Naive thymus-derived CD4-positive, alpha-beta T cell (primary cell): ENCODE measurements at regions of chr3 and their contacts with region 1.

Region 1: GRCh38 chr3:38453075-38453912 is at the start of gene ACVR2B:
- DNase-seq: peak; percentile 20 to 83 (median 58)
- ATAC-seq: peak; percentile 74
- H3K4me3 ChIP-seq: peak within 1 kb of the TSS; percentile 74
- H3K4me3 Mint-ChIP-seq: peak within 1 kb of the TSS; percentile 88 to 99 (median 97)
- H3K27ac ChIP-seq: peak within 1 kb of the TSS; percentile 60
- H3K27ac Mint-ChIP-seq: peak within 1 kb of the TSS; percentile 59 to 95 (median 91)
- H3K4me1 ChIP-seq: peaks cover 5 to 12% of the 10 kb centered on the region in 2 donors
- H3K4me1 Mint-ChIP-seq: peaks cover 7 to 32% (median 25%) of the 10 kb centered on the region in 7 donors
- H3K27me3 ChIP-seq: no peaks in the 10 kb centered on the region
- H3K27me3 Mint-ChIP-seq: peaks cover 0 to 18% (median 0%) of the 10 kb centered on the region in 5 donors
- total RNA-seq, gene ACVR2B: 3.8 to 14.0 (median 8.3) TPM

Region 2: GRCh38 chr3:38346587-38347410 is 106.5 kb before region 1 on chr3 and contains the start of gene XYLB:
- CTCF ChIA-PET with region 1: interaction called, 13 read pairs
- POLR2A ChIA-PET with region 1: interaction called, 3 read pairs
- intact Hi-C with region 1: loop called (anchors 2 kb)
- DNase-seq: peak; percentile 48 to 89 (median 67)
- ATAC-seq: peak; percentile 99
- H3K4me3 ChIP-seq: peak within 1 kb of the TSS; percentile 62
- H3K4me3 Mint-ChIP-seq: peak within 1 kb of the TSS; percentile 71 to 91 (median 83)
- H3K27ac ChIP-seq: peak within 1 kb of the TSS; percentile 61
- H3K27ac Mint-ChIP-seq: peak within 1 kb of the TSS in 3 of 9 donors; percentile 54 to 61 (median 54)
- H3K4me1 ChIP-seq: no peaks in the 10 kb centered on the region
- H3K4me1 Mint-ChIP-seq: peaks cover 2 to 7% (median 5%) of the 10 kb centered on the region in 7 donors
- H3K27me3 ChIP-seq: no peaks in the 10 kb centered on the region
- H3K27me3 Mint-ChIP-seq: peaks cover 0 to 4% (median 0%) of the 10 kb centered on the region in 5 donors
- total RNA-seq, gene XYLB: 1.00 to 6.7 (median 2.1) TPM

Region 3: DNA sequence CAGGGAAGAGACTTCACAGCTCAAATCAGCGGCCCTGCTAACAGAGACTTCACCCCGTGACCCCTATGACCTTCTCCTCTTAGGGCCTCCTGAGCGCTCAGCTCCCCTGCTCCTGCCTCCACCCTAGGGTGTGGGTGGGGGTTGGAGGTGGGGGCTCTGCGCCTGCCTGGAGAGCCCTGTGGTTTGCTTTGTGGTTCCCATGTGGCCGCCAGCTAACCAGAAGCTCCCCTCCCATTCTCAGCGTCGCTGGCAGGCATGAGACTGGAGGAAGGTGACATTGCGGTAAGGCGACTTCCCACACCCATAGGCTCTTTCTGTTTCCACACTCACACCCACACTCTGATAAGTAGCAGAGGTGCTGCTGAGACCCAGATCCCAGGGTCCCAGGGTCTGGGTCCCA is 79.1 kb before region 1 on chr3:
- CTCF ChIA-PET with region 1: no interaction called
- POLR2A ChIA-PET with region 1: no interaction called
- intact Hi-C with region 1: loop called in 1 of 2 experiments (anchors 2 kb)
- DNase-seq: peak in 6 of 9 donors; percentile 4 to 63 (median 30)
- ATAC-seq: peak; percentile 60
- H3K4me3 ChIP-seq: peak overlapping the region; percentile 1
- H3K4me3 Mint-ChIP-seq: peak overlapping the region; percentile 65 to 83 (median 78)
- H3K27ac ChIP-seq: no peak overlapping the region
- H3K27ac Mint-ChIP-seq: peak overlapping the region in 8 of 9 donors; percentile 48 to 86 (median 72)
- H3K4me1 ChIP-seq: peaks cover 19 to 24% of the 10 kb centered on the region in 2 donors
- H3K4me1 Mint-ChIP-seq: peaks cover 27 to 41% (median 30%) of the 10 kb centered on the region in 7 donors
- H3K27me3 ChIP-seq: no peaks in the 10 kb centered on the region
- H3K27me3 Mint-ChIP-seq: peaks cover 0 to 4% (median 0%) of the 10 kb centered on the region in 5 donors

Region 4: DNA sequence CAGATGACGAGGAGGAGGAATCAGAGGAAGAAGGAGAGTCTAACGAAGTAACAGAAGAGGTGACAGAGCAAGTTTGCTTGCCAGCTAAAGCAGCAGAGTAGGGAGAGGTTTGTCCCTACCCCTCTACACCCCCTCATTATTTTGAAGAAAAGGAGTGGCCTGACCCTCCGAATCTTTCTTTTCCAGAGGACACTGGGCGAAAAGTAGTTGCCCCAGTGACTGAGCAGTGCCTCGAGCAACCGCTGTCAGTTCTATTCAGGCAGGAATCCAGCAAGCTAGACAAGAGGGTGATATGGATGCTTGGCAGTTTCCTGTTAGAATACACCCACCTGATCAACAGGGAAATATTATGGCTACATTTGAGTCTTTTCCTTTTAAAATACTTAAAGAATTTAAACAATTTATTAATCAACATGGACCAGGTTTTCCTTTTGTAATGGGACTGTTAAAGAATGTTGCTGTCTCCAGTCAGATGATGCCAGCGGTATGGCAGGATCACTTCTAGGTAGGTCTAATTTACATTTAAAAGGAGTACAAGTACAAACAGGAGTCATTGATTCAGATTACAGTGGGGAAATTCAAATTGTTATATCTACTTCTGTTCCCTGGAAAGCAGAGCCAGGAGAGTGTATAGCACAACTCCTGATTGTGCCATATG is 31.5 kb before region 1 on chr3:
- CTCF ChIA-PET with region 1: interaction called, 3 read pairs
- POLR2A ChIA-PET with region 1: interaction called, 4 read pairs
- intact Hi-C with region 1: loop called in 1 of 2 experiments (anchors 2 kb)
- DNase-seq: no peak
- ATAC-seq: no peak
- H3K4me3 ChIP-seq: no peak overlapping the region
- H3K4me3 Mint-ChIP-seq: peak overlapping the region in 9 of 10 donors; percentile 15 to 87 (median 62)
- H3K27ac ChIP-seq: peak overlapping the region; percentile 16
- H3K27ac Mint-ChIP-seq: peak overlapping the region in 6 of 9 donors; percentile 51 to 95 (median 79)
- H3K4me1 ChIP-seq: peaks cover 8 to 25% of the 10 kb centered on the region in 2 donors
- H3K4me1 Mint-ChIP-seq: peaks cover 8 to 56% (median 42%) of the 10 kb centered on the region in 7 donors
- H3K27me3 ChIP-seq: no peaks in the 10 kb centered on the region
- H3K27me3 Mint-ChIP-seq: peaks cover 0 to under 1% (median 0%) of the 10 kb centered on the region in 5 donors